Lower leg skin (tissue), 4 donors: ENCODE measurements at regions of chr7 and their contacts with region 1.

Region 1: DNA sequence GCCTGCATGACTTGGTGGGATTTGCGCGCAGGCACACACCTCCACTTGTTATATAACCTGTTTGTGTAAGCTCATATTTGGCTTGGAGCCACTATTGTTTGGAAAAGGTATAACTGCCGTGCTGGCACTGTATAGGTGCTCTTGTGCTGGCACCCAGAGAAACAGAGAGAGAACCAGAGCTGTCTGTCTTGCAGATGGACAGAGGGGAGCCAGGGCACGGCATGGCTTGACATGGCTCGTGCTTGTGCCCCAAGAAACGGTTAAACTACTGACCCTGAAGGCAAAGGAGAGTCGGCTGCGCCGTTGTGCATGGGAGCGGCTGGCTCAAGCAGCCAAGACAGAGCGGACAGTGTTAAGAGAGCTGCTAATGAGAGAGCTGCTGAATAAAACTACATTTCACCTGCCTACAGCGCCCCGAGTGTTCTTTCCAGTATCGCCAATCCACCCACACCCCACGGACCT is 23.2 kb downstream of the RAPGEF5 start:
- DNase-seq: no peak
- H3K4me3 ChIP-seq: no peak overlapping the region
- CTCF ChIP-seq: no peak
- POLR2A ChIP-seq: no peak

Region 2: GRCh38 chr7:21526007-21526406 is 807.7 kb before region 1 on chr7:
- intact Hi-C with region 1: loop called (anchors 5 kb)
- DNase-seq: no peak
- H3K4me3 ChIP-seq: no peak overlapping the region
- CTCF ChIP-seq: no peak
- POLR2A ChIP-seq: no peak

Region 3: DNA sequence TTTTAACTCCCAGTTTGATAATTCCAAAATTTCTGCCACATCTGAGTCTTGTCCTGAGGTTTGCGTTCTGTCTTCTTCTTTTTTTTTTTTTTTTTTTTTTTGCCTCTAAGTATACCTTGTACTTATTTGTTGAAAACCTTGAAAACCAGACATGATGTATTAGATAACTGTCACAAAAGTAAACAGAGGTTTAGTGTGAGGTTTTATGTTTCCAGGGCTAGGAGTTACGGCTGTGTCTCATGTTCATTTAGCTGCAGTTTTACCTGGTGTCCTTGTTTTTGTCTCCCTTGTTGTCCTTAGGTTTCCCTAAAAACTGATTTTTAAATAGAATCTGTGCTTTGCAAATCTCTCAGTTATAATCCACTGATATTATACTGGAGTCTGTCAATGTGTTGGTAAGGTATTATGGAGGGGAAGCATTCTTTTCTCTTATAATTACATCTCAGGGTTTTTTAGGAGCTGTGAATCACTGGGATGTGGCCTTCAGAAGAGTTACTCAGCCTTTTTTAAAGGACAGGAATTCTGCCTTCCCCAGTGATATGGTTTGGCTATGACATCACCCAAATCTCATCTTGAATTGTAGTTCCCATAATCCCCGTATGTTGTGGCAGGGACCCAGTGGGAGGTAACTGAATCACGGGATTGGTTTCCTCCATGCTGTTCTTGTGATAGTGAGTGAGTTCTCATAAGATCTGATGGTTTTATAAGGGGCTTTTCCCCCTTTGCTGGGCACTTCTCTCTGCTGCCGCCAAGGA is 483.0 kb before region 1 on chr7:
- intact Hi-C with region 1: no loop called
- DNase-seq: no peak
- H3K4me3 ChIP-seq: no peak overlapping the region
- CTCF ChIP-seq: no peak
- POLR2A ChIP-seq: no peak

Region 4: DNA sequence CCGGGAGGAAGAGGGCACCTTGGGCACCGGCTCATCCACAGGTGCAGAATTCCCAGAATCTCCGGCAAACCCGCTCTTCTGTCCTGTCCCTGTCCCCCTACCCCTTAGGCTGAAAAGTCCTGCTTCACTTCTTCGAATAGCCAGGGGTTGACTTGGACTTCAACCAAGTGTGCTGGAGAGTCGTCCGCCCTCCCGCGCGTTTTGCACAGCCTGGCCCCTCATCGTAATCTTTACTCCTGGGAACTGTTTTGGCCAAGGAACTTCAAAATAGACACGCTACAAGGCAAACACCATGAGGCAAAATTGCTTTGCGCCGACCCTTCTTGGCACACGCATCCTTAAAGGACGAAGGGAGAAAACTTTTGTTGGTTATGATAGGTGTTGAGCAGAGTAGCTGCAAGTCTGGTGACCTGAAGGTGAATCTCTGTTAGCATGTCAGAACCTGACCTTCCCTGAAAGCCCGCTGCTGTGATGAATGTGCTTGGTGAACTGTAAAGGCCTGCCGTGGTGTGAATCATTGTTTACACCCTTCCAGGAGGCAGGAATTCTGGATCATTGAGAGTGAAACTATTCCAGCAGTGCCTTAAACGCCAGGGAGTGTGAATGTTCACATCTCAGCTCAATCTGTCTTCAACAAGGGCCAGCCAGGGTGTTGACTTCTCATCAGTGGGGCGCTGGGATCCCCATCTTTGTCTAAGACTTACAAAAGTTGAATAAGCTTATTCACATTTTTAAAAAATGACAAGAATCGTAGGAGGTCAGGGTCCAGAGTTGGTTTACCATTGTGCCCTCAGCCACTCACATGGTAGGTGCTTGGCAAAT is 23.9 kb after region 1 on chr7:
- intact Hi-C with region 1: no loop called
- DNase-seq: peak in 1 of 2 donors; percentile 47
- H3K4me3 ChIP-seq: no peak overlapping the region
- CTCF ChIP-seq: no peak
- POLR2A ChIP-seq: no peak